ENCODE measurements at regions of chr9 and their contacts with region 1.

Region 1: GRCh38 chr9:87662808-87663528 is 63.0 kb upstream of the CTSL start:
- DNase-seq: peak; percentile 86
- H3K4me3 ChIP-seq: no peak overlapping the region
- H3K27ac ChIP-seq: no peak overlapping the region
- H3K4me1 ChIP-seq: peaks cover 0 to 18% (median 7%) of the 10 kb centered on the region in 4 donors
- H3K27me3 ChIP-seq: no peaks in the 10 kb centered on the region
- CTCF ChIP-seq: peak; percentile 50 to 81 (median 69)
- EP300 ChIP-seq: no peak
- POLR2A ChIP-seq: no peak

Region 2: DNA sequence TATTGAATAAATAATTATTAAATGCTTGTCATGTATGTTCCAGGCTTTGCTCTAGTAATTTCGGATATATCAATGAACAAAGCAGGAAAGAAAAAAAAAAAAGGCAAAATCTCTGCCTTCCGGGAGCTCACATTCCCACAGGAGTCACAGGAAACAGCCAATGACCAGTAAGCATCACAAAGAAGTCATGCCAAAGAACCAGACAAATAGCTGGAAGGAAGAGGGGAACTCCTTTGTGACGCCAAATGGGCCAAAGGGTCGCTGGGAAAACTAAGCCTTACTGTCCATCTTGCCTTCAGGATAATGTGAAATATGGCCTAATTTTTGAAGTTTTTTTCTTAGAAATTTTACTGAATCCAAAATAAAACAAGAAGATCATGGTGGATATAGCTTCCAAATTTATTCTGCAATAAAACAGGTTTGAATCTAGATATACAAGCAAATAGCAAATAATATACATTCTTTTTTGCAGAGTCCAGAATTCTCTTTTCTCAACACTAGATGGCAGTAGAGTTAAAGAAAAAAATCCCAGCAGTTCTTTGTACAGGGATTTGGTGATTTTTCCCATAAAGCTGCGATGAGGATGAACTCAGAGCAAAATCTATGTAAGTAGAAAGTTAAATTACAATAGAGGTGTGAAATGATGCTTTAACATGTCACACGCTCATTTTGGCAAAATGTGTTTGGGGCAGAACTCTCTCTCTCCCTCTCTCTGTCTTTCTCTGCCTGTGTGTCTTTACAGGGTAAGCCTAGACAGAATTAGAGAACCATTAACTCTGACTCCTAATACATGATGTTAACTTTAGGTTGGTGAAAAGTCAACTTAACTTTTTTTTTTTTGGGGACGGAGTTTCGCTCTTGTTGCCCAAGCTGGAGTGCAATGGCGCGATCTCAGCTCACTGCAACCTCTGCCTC is 1248.7 kb before region 1 on chr9:
- intact Hi-C with region 1: loop called (anchors 10 kb)
- DNase-seq: no peak
- H3K4me3 ChIP-seq: no peak overlapping the region
- H3K27ac ChIP-seq: no peak overlapping the region
- H3K4me1 ChIP-seq: peaks cover 0 to 6% (median 0%) of the 10 kb centered on the region in 4 donors
- H3K27me3 ChIP-seq: no peaks in the 10 kb centered on the region
- CTCF ChIP-seq: peak; percentile 41 to 77 (median 45)
- EP300 ChIP-seq: no peak
- POLR2A ChIP-seq: no peak

Region 3: GRCh38 chr9:87336914-87337333 is 326.0 kb before region 1 on chr9:
- intact Hi-C with region 1: loop called (anchors 1 kb)
- DNase-seq: no peak
- H3K4me3 ChIP-seq: peak overlapping the region; percentile 19 to 47 (median 44)
- H3K27ac ChIP-seq: peak overlapping the region in 2 of 4 donors; percentile 44 to 53
- H3K4me1 ChIP-seq: peaks cover 0 to 17% (median 10%) of the 10 kb centered on the region in 4 donors
- H3K27me3 ChIP-seq: no peaks in the 10 kb centered on the region
- CTCF ChIP-seq: peak; percentile 63 to 77 (median 71)
- EP300 ChIP-seq: no peak
- POLR2A ChIP-seq: no peak

Region 4: GRCh38 chr9:87973122-87973521 is 310.2 kb after region 1 on chr9:
- intact Hi-C with region 1: no loop called
- DNase-seq: no peak
- H3K4me3 ChIP-seq: no peak overlapping the region
- H3K27ac ChIP-seq: peak overlapping the region in 2 of 4 donors; percentile 77 to 84
- H3K4me1 ChIP-seq: peaks cover 0 to 21% (median 11%) of the 10 kb centered on the region in 4 donors
- H3K27me3 ChIP-seq: no peaks in the 10 kb centered on the region
- CTCF ChIP-seq: no peak
- EP300 ChIP-seq: no peak
- POLR2A ChIP-seq: no peak

Measured in sigmoid colon (tissue), 7 donors.